ENCODE measurements at regions of chr9 and their contacts with region 1.

Region 1: GRCh38 chr9:129884220-129885017 is 49.2 kb downstream of the USP20 start:
- DNase-seq: peak; percentile 92 to 98 (median 97)
- ATAC-seq: peak; percentile 53
- H3K4me3 ChIP-seq: peak overlapping the region; percentile 66 to 92
- H3K4me3 Mint-ChIP-seq: peak overlapping the region; percentile 89
- H3K27ac ChIP-seq: peak overlapping the region; percentile 91 to 98
- H3K27ac Mint-ChIP-seq: peak overlapping the region; percentile 100
- H3K4me1 ChIP-seq: peaks cover 51% of the 10 kb centered on the region
- H3K4me1 Mint-ChIP-seq: peaks cover 55% of the 10 kb centered on the region
- H3K27me3 ChIP-seq: no peaks in the 10 kb centered on the region
- H3K27me3 Mint-ChIP-seq: no peaks in the 10 kb centered on the region
- CTCF ChIP-seq: no peak

Region 2: GRCh38 chr9:129802851-129803675 is 81.4 kb before region 1 on chr9 and contains the start of gene TOR1B:
- CTCF ChIA-PET with region 1: interaction called, 3 read pairs
- POLR2A ChIA-PET with region 1: interaction called, 4 read pairs
- intact Hi-C with region 1: loop called (anchors 1 to 2 kb)
- DNase-seq: peak; percentile 88 to 99 (median 95)
- ATAC-seq: peak; percentile 95
- H3K4me3 ChIP-seq: peak within 1 kb of the TSS; percentile 81 to 96
- H3K4me3 Mint-ChIP-seq: peak within 1 kb of the TSS; percentile 90
- H3K27ac ChIP-seq: peak within 1 kb of the TSS; percentile 72 to 90
- H3K27ac Mint-ChIP-seq: peak within 1 kb of the TSS; percentile 94
- H3K4me1 ChIP-seq: peaks cover 20% of the 10 kb centered on the region
- H3K4me1 Mint-ChIP-seq: peaks cover 28% of the 10 kb centered on the region
- H3K27me3 ChIP-seq: no peaks in the 10 kb centered on the region
- H3K27me3 Mint-ChIP-seq: no peaks in the 10 kb centered on the region
- CTCF ChIP-seq: no peak
- total RNA-seq, gene TOR1B: 21.3 to 22.4 TPM

Region 3: GRCh38 chr9:129835021-129835871 is 49.2 kb before region 1 on chr9 and contains the starts of genes C9orf78 and USP20:
- CTCF ChIA-PET with region 1: interaction called, 24 read pairs
- POLR2A ChIA-PET with region 1: interaction called, 21 read pairs
- intact Hi-C with region 1: loop called (anchors 1 kb)
- DNase-seq: peak; percentile 95 to 99 (median 97)
- ATAC-seq: peak; percentile 93
- H3K4me3 ChIP-seq: peak within 1 kb of the TSS; percentile 86 to 93
- H3K4me3 Mint-ChIP-seq: peak within 1 kb of the TSS; percentile 99
- H3K27ac ChIP-seq: peak within 1 kb of the TSS; percentile 89 to 94
- H3K27ac Mint-ChIP-seq: peak within 1 kb of the TSS; percentile 98
- H3K4me1 ChIP-seq: peaks cover 53% of the 10 kb centered on the region
- H3K4me1 Mint-ChIP-seq: peaks cover 62% of the 10 kb centered on the region
- H3K27me3 ChIP-seq: no peaks in the 10 kb centered on the region
- H3K27me3 Mint-ChIP-seq: no peaks in the 10 kb centered on the region
- CTCF ChIP-seq: no peak
- total RNA-seq, gene C9orf78: 176 to 190 TPM
- total RNA-seq, gene USP20: 83.5 to 91.0 TPM

Region 4: DNA sequence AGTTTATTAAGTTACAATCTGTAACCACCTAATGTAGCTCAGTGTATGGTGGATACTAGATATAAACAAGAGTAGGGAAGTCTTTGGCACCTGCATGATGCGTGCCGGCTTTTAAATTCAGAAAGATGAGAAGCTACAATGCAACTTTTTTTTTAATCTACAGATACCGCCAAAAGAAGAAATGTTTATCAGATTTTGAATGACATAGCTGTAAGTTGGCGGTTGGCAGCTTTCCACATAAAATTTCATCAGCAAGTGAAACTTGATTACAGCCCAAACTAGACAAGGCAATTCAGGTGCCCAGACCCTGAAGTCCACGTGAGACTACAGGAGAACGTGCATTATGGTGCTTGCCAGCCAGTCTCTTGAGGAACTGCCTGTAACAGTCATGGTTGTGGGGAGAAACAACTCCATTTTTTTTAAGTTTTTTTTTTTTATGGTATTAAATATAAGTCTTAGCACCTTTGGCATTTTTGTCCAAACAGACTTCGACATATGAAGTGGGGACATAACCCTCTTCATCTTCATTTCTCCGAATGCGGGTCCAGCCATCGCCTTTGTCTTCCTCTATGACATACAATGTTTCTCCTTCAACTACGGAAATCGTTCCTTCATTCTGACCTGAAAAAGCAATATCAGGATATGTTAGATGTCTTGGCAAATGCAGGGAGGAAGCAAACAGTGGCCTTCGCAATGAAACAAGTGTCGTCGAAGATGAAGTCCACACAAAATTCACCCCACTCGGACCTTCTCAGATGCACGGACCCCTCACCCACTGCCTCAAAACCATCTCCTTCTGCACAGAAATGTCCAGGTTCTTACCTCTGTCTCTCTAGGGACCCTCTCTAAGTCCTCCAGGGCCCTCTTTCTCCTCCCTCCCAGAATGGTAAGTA is 11.2 kb after region 1 on chr9:
- CTCF ChIA-PET with region 1: interaction called, 6 read pairs
- POLR2A ChIA-PET with region 1: interaction called, 11 read pairs
- intact Hi-C with region 1: loop called in 1 of 2 experiments (anchors 1 kb)
- DNase-seq: peak in 5 of 9 experiments; percentile 40 to 84 (median 74)
- ATAC-seq: peak; percentile 51
- H3K4me3 ChIP-seq: no peak overlapping the region
- H3K4me3 Mint-ChIP-seq: peak overlapping the region; percentile 32
- H3K27ac ChIP-seq: peak overlapping the region; percentile 54 to 68
- H3K27ac Mint-ChIP-seq: peak overlapping the region; percentile 96
- H3K4me1 ChIP-seq: peaks cover 53% of the 10 kb centered on the region
- H3K4me1 Mint-ChIP-seq: peaks cover 56% of the 10 kb centered on the region
- H3K27me3 ChIP-seq: no peaks in the 10 kb centered on the region
- H3K27me3 Mint-ChIP-seq: no peaks in the 10 kb centered on the region
- CTCF ChIP-seq: no peak

Region 5: GRCh38 chr9:129962889-129963703 is 78.7 kb after region 1 on chr9:
- CTCF ChIA-PET with region 1: interaction called, 21 read pairs
- POLR2A ChIA-PET with region 1: interaction called, 44 read pairs
- intact Hi-C with region 1: loop called (anchors 1 to 2 kb)
- DNase-seq: peak; percentile 54 to 94 (median 73)
- ATAC-seq: peak; percentile 93
- H3K4me3 ChIP-seq: peak overlapping the region; percentile 48 to 54
- H3K4me3 Mint-ChIP-seq: peak overlapping the region; percentile 87
- H3K27ac ChIP-seq: peak overlapping the region; percentile 81 to 93
- H3K27ac Mint-ChIP-seq: peak overlapping the region; percentile 97
- H3K4me1 ChIP-seq: peaks cover 47% of the 10 kb centered on the region
- H3K4me1 Mint-ChIP-seq: peaks cover 68% of the 10 kb centered on the region
- H3K27me3 ChIP-seq: no peaks in the 10 kb centered on the region
- H3K27me3 Mint-ChIP-seq: no peaks in the 10 kb centered on the region
- CTCF ChIP-seq: no peak

Region 6: GRCh38 chr9:130128733-130129431 is 244.5 kb after region 1 on chr9:
- CTCF ChIA-PET with region 1: no interaction called
- POLR2A ChIA-PET with region 1: interaction called, 5 read pairs
- intact Hi-C with region 1: loop called in 1 of 2 experiments (anchors 2 kb)
- DNase-seq: peak; percentile 12 to 91 (median 56)
- ATAC-seq: peak; percentile 73
- H3K4me3 ChIP-seq: peak overlapping the region; percentile 26 to 34
- H3K4me3 Mint-ChIP-seq: peak overlapping the region; percentile 80
- H3K27ac ChIP-seq: peak overlapping the region; percentile 75 to 94
- H3K27ac Mint-ChIP-seq: peak overlapping the region; percentile 98
- H3K4me1 ChIP-seq: peaks cover 52% of the 10 kb centered on the region
- H3K4me1 Mint-ChIP-seq: peaks cover 54% of the 10 kb centered on the region
- H3K27me3 ChIP-seq: no peaks in the 10 kb centered on the region
- H3K27me3 Mint-ChIP-seq: no peaks in the 10 kb centered on the region
- CTCF ChIP-seq: no peak

Measured in CD8-positive, alpha-beta T cell (primary cell).